Activated naive CD8-positive, alpha-beta T cell treated with anti-CD3 and anti-CD28 coated beads, Interleukin-2, amount 10 ng/mL, durations not matched to agents 7 days and 5 days (primary cell): ENCODE measurements at regions of chr3 and their contacts with region 1.

Region 1: GRCh38 chr3:4986782-4987537 is 7.7 kb downstream of the BHLHE40 start:
- DNase-seq: peak; percentile 84
- ATAC-seq: peak; percentile 70
- H3K4me3 Mint-ChIP-seq: peak overlapping the region; percentile 92
- H3K27ac Mint-ChIP-seq: peak overlapping the region; percentile 91
- H3K4me1 Mint-ChIP-seq: peaks cover 44% of the 10 kb centered on the region
- H3K27me3 Mint-ChIP-seq: no peaks in the 10 kb centered on the region

Region 2: DNA sequence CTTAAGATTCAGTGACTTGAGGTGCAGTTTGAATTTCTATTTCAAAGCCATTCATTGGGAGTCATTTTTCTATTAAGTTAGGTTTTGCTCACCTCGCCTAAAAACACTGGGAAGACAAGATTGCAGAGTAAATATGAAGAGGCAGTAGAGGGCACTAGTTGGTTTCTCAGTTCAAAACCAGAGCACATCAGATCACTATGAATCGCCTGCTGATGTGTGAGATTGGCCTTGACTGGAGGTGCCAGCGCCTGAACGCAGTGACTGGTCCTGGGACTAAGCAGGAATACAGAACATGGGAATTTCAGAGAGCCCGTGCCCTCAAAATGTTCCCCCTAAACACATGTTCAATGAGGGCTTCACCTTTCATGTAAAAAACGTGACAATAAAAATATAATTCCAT is 264.9 kb before region 1 on chr3:
- POLR2A ChIA-PET with region 1: interaction called, 29 read pairs
- DNase-seq: no peak
- ATAC-seq: peak; percentile 82
- H3K4me3 Mint-ChIP-seq: no peak overlapping the region
- H3K27ac Mint-ChIP-seq: peak overlapping the region; percentile 75
- H3K4me1 Mint-ChIP-seq: peaks cover 45% of the 10 kb centered on the region
- H3K27me3 Mint-ChIP-seq: no peaks in the 10 kb centered on the region

Region 3: GRCh38 chr3:4736284-4736861 is 250.6 kb before region 1 on chr3:
- POLR2A ChIA-PET with region 1: interaction called, 21 read pairs
- DNase-seq: no peak
- ATAC-seq: peak; percentile 20
- H3K4me3 Mint-ChIP-seq: peak overlapping the region; percentile 66
- H3K27ac Mint-ChIP-seq: peak overlapping the region; percentile 97
- H3K4me1 Mint-ChIP-seq: peaks cover 78% of the 10 kb centered on the region
- H3K27me3 Mint-ChIP-seq: no peaks in the 10 kb centered on the region

Region 4: DNA sequence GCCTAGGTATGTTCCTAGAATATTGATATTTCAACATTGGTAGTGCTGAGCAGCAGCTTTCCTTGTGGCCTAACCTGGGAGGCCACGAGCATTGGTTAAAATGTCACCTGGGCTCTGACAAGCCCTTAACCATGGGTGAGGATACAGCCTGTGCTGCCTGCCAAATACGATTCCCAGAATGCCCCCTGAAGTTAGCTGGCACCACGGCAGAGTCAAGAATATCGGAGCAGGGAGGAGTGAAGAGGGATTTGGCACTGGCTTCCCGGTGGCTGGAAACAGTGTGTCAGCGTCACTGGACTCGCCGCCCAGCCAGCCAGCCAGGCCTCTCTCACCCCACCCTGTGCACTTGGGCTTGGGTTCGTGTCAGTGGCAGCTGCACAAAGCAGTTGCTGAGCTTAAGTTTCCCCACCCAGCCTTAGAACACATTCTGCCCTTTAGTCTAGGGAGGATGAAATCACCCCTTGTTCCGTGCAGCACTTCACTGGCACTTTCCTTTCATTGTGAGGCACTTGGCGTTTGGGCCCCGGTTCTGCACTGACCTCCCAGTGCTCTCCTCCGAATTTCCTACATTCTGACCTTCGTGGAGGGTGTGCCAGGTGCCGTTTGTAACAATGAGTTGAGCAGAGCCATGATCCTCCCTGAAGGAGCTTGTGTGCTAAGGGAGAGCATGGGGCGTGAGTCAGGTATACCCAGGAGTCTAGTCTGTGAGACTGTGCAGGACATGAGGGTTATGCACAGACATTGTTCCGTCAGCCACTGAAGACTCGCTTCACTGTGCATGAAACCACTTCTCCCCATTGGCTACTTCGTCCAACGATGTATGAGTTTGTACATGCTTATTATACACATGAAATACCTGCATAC is 160.5 kb before region 1 on chr3:
- POLR2A ChIA-PET with region 1: interaction called, 489 read pairs
- DNase-seq: no peak
- ATAC-seq: no peak
- H3K4me3 Mint-ChIP-seq: peak overlapping the region; percentile 86
- H3K27ac Mint-ChIP-seq: peak overlapping the region; percentile 92
- H3K4me1 Mint-ChIP-seq: peaks cover 91% of the 10 kb centered on the region
- H3K27me3 Mint-ChIP-seq: no peaks in the 10 kb centered on the region

Region 5: DNA sequence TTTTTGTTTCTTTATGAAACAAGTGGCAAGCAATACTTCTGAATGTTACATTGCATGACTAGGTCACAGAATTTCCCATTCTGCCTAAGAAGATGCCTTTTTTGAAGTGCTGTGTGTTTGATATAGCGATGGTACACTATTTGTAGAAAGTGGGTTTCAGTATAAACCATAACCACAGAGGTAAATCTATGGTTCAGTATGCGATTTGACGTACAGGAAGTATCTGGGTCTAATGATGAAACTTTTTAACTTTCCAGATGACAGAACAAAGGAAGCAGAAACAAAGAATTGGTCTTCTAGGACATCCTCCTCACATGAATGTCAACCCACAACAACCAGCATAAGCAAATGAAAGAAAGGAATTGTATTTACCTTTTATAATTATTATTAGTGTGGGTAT is 141.1 kb before region 1 on chr3:
- POLR2A ChIA-PET with region 1: interaction called, 154 read pairs
- DNase-seq: no peak
- ATAC-seq: peak; percentile 59
- H3K4me3 Mint-ChIP-seq: peak overlapping the region; percentile 59
- H3K27ac Mint-ChIP-seq: peak overlapping the region; percentile 90
- H3K4me1 Mint-ChIP-seq: peaks cover 84% of the 10 kb centered on the region
- H3K27me3 Mint-ChIP-seq: no peaks in the 10 kb centered on the region